Calu3 (cell line): ENCODE measurements at regions of chr6 and their contacts with region 1.

Region 1: DNA sequence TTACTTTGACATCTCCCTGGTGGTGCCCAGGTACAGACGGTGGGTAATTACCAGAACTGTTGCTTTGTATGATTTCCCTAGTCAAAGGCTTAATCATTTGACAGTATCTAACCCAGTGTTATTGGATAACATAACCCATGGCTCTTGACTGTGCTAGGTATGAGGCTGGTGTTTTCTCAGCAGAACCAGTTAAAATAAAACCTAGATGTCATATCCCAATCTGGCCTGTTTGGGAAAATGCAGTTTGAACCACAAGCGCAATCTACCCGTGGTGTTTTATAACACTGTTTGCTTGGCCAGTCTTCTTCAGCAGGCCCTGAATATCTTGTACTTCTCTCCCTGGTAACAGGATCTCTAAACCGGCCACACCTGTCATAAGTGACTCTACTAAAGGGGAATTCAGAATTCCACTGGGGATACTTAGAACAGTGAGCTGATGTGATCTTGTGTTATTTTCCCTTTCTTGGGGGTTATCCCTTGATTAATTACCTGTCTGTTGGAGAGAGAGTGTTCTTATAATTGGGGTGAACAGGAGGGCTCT is 32.8 kb downstream of the PPP1R14C start:
- DNase-seq: no peak
- H3K4me3 Mint-ChIP-seq: no peak overlapping the region
- H3K27ac Mint-ChIP-seq: no peak overlapping the region
- H3K4me1 Mint-ChIP-seq: peaks cover 9% of the 10 kb centered on the region
- H3K27me3 Mint-ChIP-seq: no peaks in the 10 kb centered on the region
- CTCF ChIP-seq: no peak

Region 2: DNA sequence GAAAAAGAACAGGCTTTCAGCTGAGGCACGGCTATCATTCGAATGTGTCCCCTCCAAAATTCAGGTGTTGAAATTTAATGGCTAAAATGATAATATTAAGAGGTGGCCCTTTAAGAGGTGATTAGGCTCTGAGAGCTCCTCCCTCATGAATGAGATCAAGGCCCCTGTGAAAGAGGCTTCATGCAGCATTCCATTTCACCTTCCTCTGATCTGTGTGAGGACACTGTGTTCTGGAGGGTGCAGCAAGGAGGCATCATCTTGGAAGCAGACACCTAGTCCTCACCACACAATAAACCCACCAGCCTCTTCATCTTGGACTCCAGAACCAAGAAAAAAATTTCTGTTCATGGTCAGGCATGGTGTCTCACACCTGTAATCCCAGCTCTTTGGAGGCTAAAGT is 23.6 kb after region 1 on chr6:
- CTCF ChIA-PET with region 1: no interaction called
- intact Hi-C with region 1: loop called (anchors 1 kb)
- DNase-seq: no peak
- H3K4me3 Mint-ChIP-seq: no peak overlapping the region
- H3K27ac Mint-ChIP-seq: no peak overlapping the region
- H3K4me1 Mint-ChIP-seq: peaks cover 29% of the 10 kb centered on the region
- H3K27me3 Mint-ChIP-seq: no peaks in the 10 kb centered on the region
- CTCF ChIP-seq: no peak